Activated B cell treated with CpG ODN at 0.5 μM for 24 hours (primary cell): ENCODE measurements at regions of chr10 and their contacts with region 1.

Region 1: GRCh38 chr10:124539935-124540641 is 78.5 kb downstream of the LHPP start:
- DNase-seq: peak; percentile 71
- ATAC-seq: peak; percentile 66
- H3K4me3 Mint-ChIP-seq: peak overlapping the region; percentile 50
- H3K27ac Mint-ChIP-seq: peak overlapping the region; percentile 82
- H3K4me1 Mint-ChIP-seq: peaks cover 89% of the 10 kb centered on the region
- H3K27me3 Mint-ChIP-seq: no peaks in the 10 kb centered on the region
- CTCF ChIP-seq: no peak

Region 2: GRCh38 chr10:124619195-124619594 is 79.1 kb after region 1 on chr10:
- CTCF ChIA-PET with region 1: interaction called, 7 read pairs
- POLR2A ChIA-PET with region 1: interaction called, 43 read pairs
- intact Hi-C with region 1: loop called (anchors 1 kb)
- DNase-seq: no peak
- ATAC-seq: peak; percentile 72
- H3K4me3 Mint-ChIP-seq: peak overlapping the region; percentile 69
- H3K27ac Mint-ChIP-seq: peak overlapping the region; percentile 96
- H3K4me1 Mint-ChIP-seq: peaks cover 99% of the 10 kb centered on the region
- H3K27me3 Mint-ChIP-seq: no peaks in the 10 kb centered on the region
- CTCF ChIP-seq: no peak

Region 3: DNA sequence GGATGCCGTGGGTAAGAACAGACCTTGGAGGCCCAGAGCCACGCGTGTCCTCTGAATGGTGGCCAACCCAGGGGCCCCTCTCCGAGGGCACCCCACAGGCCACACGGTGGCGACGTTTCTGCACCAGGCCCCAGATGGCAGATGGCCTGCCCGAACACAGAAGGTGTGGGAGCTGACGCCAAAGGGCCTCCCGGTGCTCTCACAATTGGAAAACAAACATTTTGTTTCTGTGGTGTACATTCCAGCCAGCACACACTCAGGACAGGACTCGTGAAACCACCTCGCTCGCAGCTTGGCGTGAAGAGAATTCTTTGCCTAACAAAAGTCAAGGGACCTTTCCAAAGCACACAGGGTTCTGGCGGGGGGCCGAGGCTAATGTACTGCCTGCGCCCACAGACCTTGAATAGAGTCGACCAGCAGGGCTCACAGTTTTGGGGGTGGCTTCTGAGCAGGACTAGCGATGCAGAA is 92.0 kb after region 1 on chr10:
- CTCF ChIA-PET with region 1: interaction called, 8 read pairs
- POLR2A ChIA-PET with region 1: interaction called, 12 read pairs
- intact Hi-C with region 1: no loop called
- DNase-seq: no peak
- ATAC-seq: no peak
- H3K4me3 Mint-ChIP-seq: no peak overlapping the region
- H3K27ac Mint-ChIP-seq: peak overlapping the region; percentile 95
- H3K4me1 Mint-ChIP-seq: peaks cover 95% of the 10 kb centered on the region
- H3K27me3 Mint-ChIP-seq: no peaks in the 10 kb centered on the region
- CTCF ChIP-seq: no peak

Region 4: GRCh38 chr10:124697830-124698544 is 157.9 kb after region 1 on chr10:
- CTCF ChIA-PET with region 1: interaction called, 4 read pairs
- POLR2A ChIA-PET with region 1: interaction called, 13 read pairs
- intact Hi-C with region 1: no loop called
- DNase-seq: peak; percentile 44
- ATAC-seq: peak; percentile 45
- H3K4me3 Mint-ChIP-seq: peak overlapping the region; percentile 69
- H3K27ac Mint-ChIP-seq: peak overlapping the region; percentile 96
- H3K4me1 Mint-ChIP-seq: peaks cover 100% of the 10 kb centered on the region
- H3K27me3 Mint-ChIP-seq: no peaks in the 10 kb centered on the region
- CTCF ChIP-seq: no peak